CD8-positive, alpha-beta memory T cell (primary cell): ENCODE measurements at regions of chr14 and their contacts with region 1.

Region 1: GRCh38 chr14:70714055-70714621 is 72.4 kb downstream of the TTC9 start:
- DNase-seq: peak; percentile 23 to 59 (median 36)
- H3K4me3 ChIP-seq: no peak overlapping the region
- H3K4me3 Mint-ChIP-seq: no peak overlapping the region
- H3K27ac ChIP-seq: no peak overlapping the region
- H3K27ac Mint-ChIP-seq: peak overlapping the region in 1 of 8 donors; percentile 1
- H3K4me1 ChIP-seq: peaks cover 7% of the 10 kb centered on the region
- H3K4me1 Mint-ChIP-seq: peaks cover 2 to 5% (median 4%) of the 10 kb centered on the region in 3 donors
- H3K27me3 ChIP-seq: no peaks in the 10 kb centered on the region
- H3K27me3 Mint-ChIP-seq: peaks cover 0 to 8% of the 10 kb centered on the region in 2 donors

Region 2: GRCh38 chr14:70622111-70622712 is 91.9 kb before region 1 on chr14:
- CTCF ChIA-PET with region 1: interaction called, 25 read pairs
- POLR2A ChIA-PET with region 1: no interaction called
- DNase-seq: peak in 4 of 5 donors; percentile 35 to 63 (median 51)
- H3K4me3 ChIP-seq: no peak overlapping the region
- H3K4me3 Mint-ChIP-seq: no peak overlapping the region
- H3K27ac ChIP-seq: no peak overlapping the region
- H3K27ac Mint-ChIP-seq: peak overlapping the region in 1 of 8 donors; percentile 44
- H3K4me1 ChIP-seq: no peaks in the 10 kb centered on the region
- H3K4me1 Mint-ChIP-seq: no peaks in the 10 kb centered on the region
- H3K27me3 ChIP-seq: no peaks in the 10 kb centered on the region
- H3K27me3 Mint-ChIP-seq: peaks cover 0 to 7% of the 10 kb centered on the region in 2 donors

Region 3: DNA sequence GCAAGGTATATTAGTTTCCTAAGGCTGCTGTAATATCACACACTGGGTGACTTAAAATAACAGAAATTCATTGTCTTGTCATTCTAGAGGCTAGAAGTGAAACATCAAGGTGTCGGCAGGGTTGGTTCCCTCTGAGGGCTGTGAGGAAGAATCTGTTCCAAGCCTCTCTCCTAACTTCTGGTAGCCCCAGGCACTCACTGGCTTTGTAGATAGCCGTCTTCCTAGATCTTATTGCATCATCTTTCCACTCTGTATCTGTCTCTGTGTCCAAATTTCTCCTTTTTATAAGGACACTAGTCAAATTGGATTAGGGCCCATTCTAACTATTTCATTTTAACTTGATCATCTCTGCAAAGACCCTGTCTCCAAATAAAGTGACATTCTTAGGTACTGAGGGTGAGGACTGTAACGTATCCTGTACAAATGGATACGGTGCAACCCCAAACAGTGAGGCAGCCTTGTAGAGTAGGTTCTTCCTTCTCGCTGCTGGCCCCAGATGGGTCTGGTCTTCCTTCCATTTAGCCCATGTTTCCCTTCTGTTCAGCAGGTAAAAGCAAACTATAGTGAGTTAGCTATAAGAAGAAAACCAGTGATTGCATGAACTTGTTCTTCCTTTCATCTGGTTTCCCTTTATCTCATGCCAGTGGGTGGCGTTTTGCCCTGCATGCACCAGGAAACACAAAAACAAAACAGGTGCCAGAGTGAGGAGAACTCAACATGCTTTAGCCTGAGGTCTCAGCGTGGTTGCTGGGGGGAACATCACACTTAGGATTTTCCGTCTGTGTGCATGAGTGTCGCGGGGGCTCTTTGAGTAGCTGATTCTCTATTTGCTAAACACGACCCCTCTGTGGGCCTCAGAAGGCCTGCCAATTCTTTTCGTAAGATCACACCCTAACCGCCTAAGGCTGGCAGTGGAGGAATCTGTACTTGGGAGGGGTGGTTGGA is 52.9 kb before region 1 on chr14:
- CTCF ChIA-PET with region 1: interaction called, 16 read pairs
- POLR2A ChIA-PET with region 1: no interaction called
- DNase-seq: peak in 4 of 5 donors; percentile 13 to 81 (median 43)
- H3K4me3 ChIP-seq: no peak overlapping the region
- H3K4me3 Mint-ChIP-seq: peak overlapping the region; percentile 12 to 76 (median 46)
- H3K27ac ChIP-seq: no peak overlapping the region
- H3K27ac Mint-ChIP-seq: peak overlapping the region; percentile 66 to 98 (median 90)
- H3K4me1 ChIP-seq: peaks cover 82% of the 10 kb centered on the region
- H3K4me1 Mint-ChIP-seq: peaks cover 74 to 89% (median 82%) of the 10 kb centered on the region in 3 donors
- H3K27me3 ChIP-seq: no peaks in the 10 kb centered on the region
- H3K27me3 Mint-ChIP-seq: no peaks in the 10 kb centered on the region